ENCODE measurements at regions of chr4 and their contacts with region 1.

Region 1: GRCh38 chr4:95549246-95550114 is 707 bp upstream of the UNC5C start:
- H3K4me3 ChIP-seq: peak overlapping the region; percentile 66
- H3K27ac ChIP-seq: peak overlapping the region; percentile 89
- H3K4me1 ChIP-seq: peaks cover 3% of the 10 kb centered on the region
- CTCF ChIP-seq: 0 out of 2 replicates have a peak, but pooled peaks have one; percentile 41

Region 2: DNA sequence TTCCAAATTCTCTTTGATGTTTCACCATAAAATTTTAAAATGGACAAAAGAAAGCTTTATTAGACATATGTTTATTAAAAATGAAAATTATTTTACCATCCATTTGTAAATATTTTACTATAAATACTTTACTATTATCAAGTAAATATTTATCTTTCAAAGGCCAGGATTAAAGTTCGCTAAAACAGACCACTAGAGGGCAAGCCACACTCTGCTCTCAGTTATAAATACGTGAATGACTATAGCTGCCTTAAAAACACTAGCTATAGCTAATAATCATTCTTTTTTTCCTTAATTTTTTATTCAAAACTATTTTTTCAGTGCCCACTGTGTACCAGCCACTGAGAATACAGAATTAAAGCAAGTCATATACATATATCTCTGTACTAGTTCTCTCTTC is 39.3 kb before region 1 on chr4:
- CTCF ChIA-PET with region 1: interaction called, 12 read pairs
- POLR2A ChIA-PET with region 1: no interaction called
- H3K4me3 ChIP-seq: no peak overlapping the region
- H3K27ac ChIP-seq: no peak overlapping the region
- H3K4me1 ChIP-seq: peaks cover 9% of the 10 kb centered on the region
- CTCF ChIP-seq: no peak

Region 3: DNA sequence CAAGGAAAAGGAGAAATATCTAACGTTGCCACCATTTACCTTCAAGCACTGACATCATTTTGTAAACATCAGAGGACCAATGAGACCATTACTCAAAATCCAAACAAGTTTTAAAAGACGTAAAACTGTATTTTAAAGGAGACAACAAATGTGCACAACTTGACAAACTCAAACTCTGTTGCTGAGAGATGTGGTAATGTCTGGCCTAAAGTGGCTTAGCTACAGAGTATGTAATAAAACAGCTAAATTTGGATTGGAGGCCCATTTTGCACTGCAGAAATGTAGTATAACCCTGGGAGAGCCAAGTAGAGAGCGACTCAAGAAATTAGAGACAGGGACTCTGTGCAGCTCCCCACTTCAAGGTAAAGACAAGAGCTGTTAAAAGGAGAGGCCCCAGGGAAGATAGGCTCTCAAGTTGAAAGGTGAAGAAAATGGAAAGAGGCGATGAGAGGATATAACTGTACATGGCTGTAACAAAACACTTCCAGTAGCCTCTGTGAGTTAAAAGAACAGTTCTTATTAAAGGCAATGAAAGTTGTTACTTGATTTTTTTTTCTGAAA is 21.0 kb before region 1 on chr4:
- CTCF ChIA-PET with region 1: interaction called, 10 read pairs
- POLR2A ChIA-PET with region 1: interaction called, 10 read pairs
- H3K4me3 ChIP-seq: no peak overlapping the region
- H3K27ac ChIP-seq: peak overlapping the region; percentile 28; the same call in 1 of the 2 replicates
- H3K4me1 ChIP-seq: peaks cover 22% of the 10 kb centered on the region
- CTCF ChIP-seq: no peak

Region 4: DNA sequence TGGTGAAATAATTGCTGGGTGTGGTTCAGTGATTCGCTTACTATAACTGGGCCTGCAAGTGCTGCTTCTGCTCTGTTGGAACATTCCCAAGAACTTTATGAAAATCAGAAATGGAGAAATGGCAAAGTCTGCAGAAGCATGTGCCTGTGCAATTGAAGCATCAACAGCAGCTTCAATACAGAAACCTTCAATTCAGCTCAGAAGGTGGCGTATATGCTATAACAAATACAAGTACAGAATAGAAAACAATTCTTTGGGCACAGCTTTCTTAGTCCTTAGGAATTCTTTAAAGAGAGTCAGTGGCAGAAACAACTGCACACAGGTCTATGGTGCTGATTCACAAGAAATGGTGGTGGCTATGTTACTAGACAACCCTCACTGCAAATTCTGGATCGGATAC is 272.4 kb after region 1 on chr4:
- CTCF ChIA-PET with region 1: no interaction called
- POLR2A ChIA-PET with region 1: no interaction called
- H3K4me3 ChIP-seq: no peak overlapping the region
- H3K27ac ChIP-seq: no peak overlapping the region
- H3K4me1 ChIP-seq: no peaks in the 10 kb centered on the region
- CTCF ChIP-seq: no peak